WTC11 (cell line): ENCODE measurements at regions of chr2 and their contacts with region 1.

Region 1: GRCh38 chr2:117519721-117520120 is 294.8 kb upstream of the DDX18 start:
- DNase-seq: no peak
- ATAC-seq: no peak
- H3K4me3 Mint-ChIP-seq: no peak overlapping the region
- H3K27ac Mint-ChIP-seq: no peak overlapping the region
- H3K4me1 Mint-ChIP-seq: peaks cover 17% of the 10 kb centered on the region
- H3K27me3 Mint-ChIP-seq: no peaks in the 10 kb centered on the region
- CTCF ChIP-seq: no peak

Region 2: DNA sequence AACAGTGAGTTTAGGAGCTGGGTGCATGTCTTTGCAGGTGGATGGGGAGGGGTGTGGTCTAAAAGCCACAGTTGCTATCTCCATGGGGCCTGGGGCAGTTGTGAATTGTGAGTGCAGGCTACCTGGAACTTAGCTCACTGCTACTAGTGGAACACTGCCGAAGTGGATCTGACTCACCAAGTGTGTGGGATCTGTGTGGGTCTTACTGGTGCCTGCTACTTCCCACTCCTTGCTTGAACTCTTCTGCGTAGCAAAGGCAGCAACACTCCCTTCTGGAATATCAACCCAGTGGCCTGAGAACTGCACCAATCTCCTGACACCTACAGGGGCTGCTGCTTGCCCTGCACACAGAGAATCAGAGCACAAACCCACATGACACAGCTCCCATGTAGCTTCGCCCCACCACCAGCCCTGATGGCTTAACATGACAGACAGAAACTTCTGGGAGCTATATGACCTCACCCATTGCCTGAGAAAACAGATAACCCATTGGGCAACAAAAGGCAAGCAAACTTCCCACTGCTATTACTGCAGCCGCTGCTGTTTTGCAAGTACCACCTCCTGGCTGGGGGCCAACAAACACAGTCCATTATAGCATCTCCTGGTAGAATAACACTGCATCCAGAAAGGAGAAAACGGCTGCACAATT is 160.3 kb before region 1 on chr2:
- CTCF ChIA-PET with region 1: no interaction called
- POLR2A ChIA-PET with region 1: no interaction called
- DNase-seq: no peak
- ATAC-seq: peak; percentile 55; the same call in 1 of the 2 replicates
- H3K4me3 Mint-ChIP-seq: no peak overlapping the region
- H3K27ac Mint-ChIP-seq: no peak overlapping the region
- H3K4me1 Mint-ChIP-seq: peaks cover 5% of the 10 kb centered on the region
- H3K27me3 Mint-ChIP-seq: no peaks in the 10 kb centered on the region
- CTCF ChIP-seq: no peak

Region 3: DNA sequence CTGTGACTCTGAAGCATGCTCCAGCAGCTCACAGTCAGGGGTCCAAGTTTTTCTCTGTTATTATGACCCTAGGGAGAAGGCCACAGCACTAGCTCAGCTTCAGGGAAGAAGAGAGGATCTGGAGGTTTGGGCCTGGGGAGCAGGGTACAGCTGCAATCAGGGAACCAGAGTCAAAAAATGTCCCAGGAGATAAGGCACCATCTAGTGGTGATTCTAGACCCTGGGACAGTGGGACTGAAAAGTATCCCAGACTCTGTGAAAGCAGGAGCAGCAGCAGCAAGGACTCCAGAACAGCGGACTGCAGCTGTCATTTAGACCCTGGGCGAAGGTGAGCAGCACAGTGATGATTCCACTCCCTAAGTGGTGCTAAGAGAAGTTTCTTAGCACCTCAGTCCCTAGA is 16.4 kb after region 1 on chr2:
- CTCF ChIA-PET with region 1: interaction called, 10 read pairs
- POLR2A ChIA-PET with region 1: no interaction called
- DNase-seq: peak; percentile 28
- ATAC-seq: peak; percentile 96
- H3K4me3 Mint-ChIP-seq: no peak overlapping the region
- H3K27ac Mint-ChIP-seq: no peak overlapping the region
- H3K4me1 Mint-ChIP-seq: peaks cover 27% of the 10 kb centered on the region
- H3K27me3 Mint-ChIP-seq: no peaks in the 10 kb centered on the region
- CTCF ChIP-seq: no peak; the same call in 1 of the 2 replicates